Activated CD4-positive, alpha-beta T cell treated with anti-CD3 and anti-CD28 coated beads for 36 hours (primary cell): ENCODE measurements at regions of chr17 and their contacts with region 1.

Region 1: GRCh38 chr17:8383143-8383822 is at the start of gene RPL26:
- DNase-seq: peak; percentile 96
- ATAC-seq: peak; percentile 92
- H3K4me3 Mint-ChIP-seq: peak within 1 kb of the TSS; percentile 100
- H3K27ac Mint-ChIP-seq: peak within 1 kb of the TSS; percentile 99
- H3K4me1 Mint-ChIP-seq: peaks cover 50% of the 10 kb centered on the region
- H3K27me3 Mint-ChIP-seq: no peaks in the 10 kb centered on the region
- total RNA-seq, gene RPL26: 3,064 to 3,721 TPM

Region 2: DNA sequence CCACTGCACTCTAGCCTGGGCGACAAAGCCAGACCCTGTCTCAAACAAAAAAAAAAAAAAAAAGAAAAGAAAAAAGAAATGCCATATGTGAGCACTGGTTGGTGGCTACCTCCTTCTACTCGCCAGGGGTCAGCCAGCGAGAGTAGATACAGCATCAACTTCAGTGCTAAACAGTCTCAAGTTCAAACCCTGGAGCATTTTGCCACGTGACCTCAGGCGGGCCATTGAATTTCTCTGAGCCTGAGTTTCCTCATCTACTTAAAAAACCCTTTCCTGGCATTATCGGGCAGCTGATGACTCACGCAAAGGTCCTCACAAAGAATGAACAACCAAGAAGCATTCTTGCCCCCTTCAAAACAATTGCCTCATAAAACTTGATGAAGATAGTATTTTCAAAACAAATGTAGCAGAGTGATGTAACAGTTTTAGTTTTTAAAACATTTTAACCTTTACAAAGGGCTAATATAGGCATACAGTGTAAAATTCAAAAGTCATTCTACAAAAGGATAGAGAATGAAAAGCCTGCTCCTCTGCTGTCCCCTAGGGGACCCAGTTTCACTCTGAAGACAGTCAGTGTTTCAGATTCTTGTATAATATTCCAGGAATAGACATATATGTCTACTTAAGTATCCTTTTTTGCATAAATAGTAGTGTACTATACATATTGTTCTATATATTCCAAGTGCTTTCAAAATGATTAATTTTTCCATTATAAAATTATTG is 637.4 kb before region 1 on chr17:
- CTCF ChIA-PET with region 1: no interaction called
- POLR2A ChIA-PET with region 1: no interaction called
- intact Hi-C with region 1: no loop called
- DNase-seq: no peak
- ATAC-seq: no peak
- H3K4me3 Mint-ChIP-seq: no peak overlapping the region
- H3K27ac Mint-ChIP-seq: no peak overlapping the region
- H3K4me1 Mint-ChIP-seq: no peaks in the 10 kb centered on the region
- H3K27me3 Mint-ChIP-seq: peaks cover 3% of the 10 kb centered on the region

Region 3: GRCh38 chr17:8138672-8139371 is 244.5 kb before region 1 on chr17:
- CTCF ChIA-PET with region 1: no interaction called
- POLR2A ChIA-PET with region 1: no interaction called
- intact Hi-C with region 1: loop called in 1 of 2 experiments (anchors 5 kb)
- DNase-seq: peak; percentile 98
- ATAC-seq: peak; percentile 90
- H3K4me3 Mint-ChIP-seq: no peak overlapping the region
- H3K27ac Mint-ChIP-seq: no peak overlapping the region
- H3K4me1 Mint-ChIP-seq: no peaks in the 10 kb centered on the region
- H3K27me3 Mint-ChIP-seq: no peaks in the 10 kb centered on the region

Region 4: DNA sequence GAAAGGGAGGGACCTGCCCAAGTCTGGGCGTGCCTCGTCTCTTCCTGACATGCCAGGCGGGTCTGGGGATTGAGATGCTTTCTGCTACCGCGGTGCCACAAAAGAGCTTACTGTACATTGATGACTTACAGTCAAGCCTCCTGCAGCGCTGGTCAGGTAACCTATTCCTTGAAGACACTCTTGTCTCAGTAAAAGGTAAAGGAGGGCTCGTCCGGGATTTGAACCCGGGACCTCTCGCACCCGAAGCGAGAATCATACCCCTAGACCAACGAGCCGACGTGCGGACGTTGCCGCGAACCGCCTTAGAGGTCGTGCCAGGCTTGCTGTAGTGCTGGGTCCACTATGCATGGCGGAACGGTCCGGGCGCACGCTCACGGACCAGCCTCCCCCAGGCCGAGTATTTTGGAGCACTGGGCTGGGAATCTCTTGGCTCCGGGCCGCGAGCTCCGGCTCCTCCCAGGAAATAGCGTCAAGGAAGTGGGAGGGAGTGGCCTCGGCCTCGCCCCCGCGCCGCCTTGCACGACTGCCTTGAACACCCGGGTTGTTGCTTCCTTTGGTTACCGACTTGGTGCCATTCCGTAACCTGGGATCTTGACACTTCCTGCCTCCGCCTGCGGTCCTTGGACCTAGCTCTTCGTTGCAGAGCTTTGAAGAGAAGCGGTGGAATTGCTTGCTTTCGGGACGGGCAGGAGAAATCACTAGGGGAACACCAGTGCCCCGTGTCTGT is 160.5 kb before region 1 on chr17:
- CTCF ChIA-PET with region 1: no interaction called
- POLR2A ChIA-PET with region 1: no interaction called
- intact Hi-C with region 1: loop called in 1 of 2 experiments (anchors 1 kb)
- DNase-seq: peak; percentile 94
- ATAC-seq: peak; percentile 35
- H3K4me3 Mint-ChIP-seq: peak overlapping the region; percentile 98
- H3K27ac Mint-ChIP-seq: peak overlapping the region; percentile 98
- H3K4me1 Mint-ChIP-seq: peaks cover 54% of the 10 kb centered on the region
- H3K27me3 Mint-ChIP-seq: no peaks in the 10 kb centered on the region

Region 5: GRCh38 chr17:8435245-8436168 is 52.2 kb after region 1 on chr17 and contains the start of gene NDEL1:
- CTCF ChIA-PET with region 1: interaction called, 7 read pairs
- POLR2A ChIA-PET with region 1: no interaction called
- intact Hi-C with region 1: loop called (anchors 1 kb)
- DNase-seq: peak; percentile 100
- ATAC-seq: peak; percentile 98
- H3K4me3 Mint-ChIP-seq: peak within 1 kb of the TSS; percentile 87
- H3K27ac Mint-ChIP-seq: peak within 1 kb of the TSS; percentile 91
- H3K4me1 Mint-ChIP-seq: peaks cover 29% of the 10 kb centered on the region
- H3K27me3 Mint-ChIP-seq: no peaks in the 10 kb centered on the region
- total RNA-seq, gene NDEL1: 51.9 to 58.6 TPM

Region 6: GRCh38 chr17:8785547-8786413 is 402.5 kb after region 1 on chr17:
- CTCF ChIA-PET with region 1: interaction called, 4 read pairs
- POLR2A ChIA-PET with region 1: no interaction called
- intact Hi-C with region 1: loop called in 1 of 2 experiments (anchors 1 kb)
- DNase-seq: peak; percentile 79
- ATAC-seq: peak; percentile 61
- H3K4me3 Mint-ChIP-seq: no peak overlapping the region
- H3K27ac Mint-ChIP-seq: no peak overlapping the region
- H3K4me1 Mint-ChIP-seq: no peaks in the 10 kb centered on the region
- H3K27me3 Mint-ChIP-seq: peaks cover 6% of the 10 kb centered on the region